ENCODE measurements at regions of chr11 and their contacts with region 1.

Region 1: GRCh38 chr11:67345920-67346799 is 7.2 kb downstream of the POLD4 start:
- DNase-seq: no peak
- H3K4me3 ChIP-seq: no peak overlapping the region
- H3K27ac ChIP-seq: no peak overlapping the region
- H3K4me1 ChIP-seq: no peaks in the 10 kb centered on the region
- H3K27me3 ChIP-seq: no peaks in the 10 kb centered on the region
- CTCF ChIP-seq: peak in 2 of 3 experiments; percentile 68 to 86; a peak in 3 of 4 replicates
- EP300 ChIP-seq: no peak
- POLR2A ChIP-seq: no peak
- RAD21 ChIP-seq: peak; percentile 55 to 63

Region 2: DNA sequence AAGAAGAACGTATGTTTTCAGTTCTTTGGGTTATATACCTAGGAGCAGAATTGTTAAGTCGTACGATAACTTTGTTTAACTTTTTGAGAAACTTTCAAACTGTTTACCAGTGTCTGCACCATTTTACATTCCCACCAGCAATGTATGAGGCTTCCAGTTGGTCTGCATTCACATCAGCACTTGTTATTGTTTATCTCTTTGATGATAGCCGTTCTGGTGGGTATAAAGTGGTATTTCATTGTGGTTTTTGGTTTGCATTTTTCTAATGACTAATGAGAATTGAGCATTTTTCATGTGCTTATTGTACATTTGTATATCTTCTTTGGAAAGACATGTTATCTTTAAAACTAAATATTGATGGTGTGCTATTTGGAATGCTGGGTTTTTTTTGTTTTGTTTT is 167.3 kb before region 1 on chr11:
- CTCF ChIA-PET with region 1: no interaction called
- POLR2A ChIA-PET with region 1: no interaction called
- DNase-seq: no peak
- H3K4me3 ChIP-seq: no peak overlapping the region
- H3K27ac ChIP-seq: no peak overlapping the region
- H3K4me1 ChIP-seq: no peaks in the 10 kb centered on the region
- H3K27me3 ChIP-seq: no peaks in the 10 kb centered on the region
- CTCF ChIP-seq: no peak
- EP300 ChIP-seq: no peak
- POLR2A ChIP-seq: no peak
- RAD21 ChIP-seq: no peak

Region 3: DNA sequence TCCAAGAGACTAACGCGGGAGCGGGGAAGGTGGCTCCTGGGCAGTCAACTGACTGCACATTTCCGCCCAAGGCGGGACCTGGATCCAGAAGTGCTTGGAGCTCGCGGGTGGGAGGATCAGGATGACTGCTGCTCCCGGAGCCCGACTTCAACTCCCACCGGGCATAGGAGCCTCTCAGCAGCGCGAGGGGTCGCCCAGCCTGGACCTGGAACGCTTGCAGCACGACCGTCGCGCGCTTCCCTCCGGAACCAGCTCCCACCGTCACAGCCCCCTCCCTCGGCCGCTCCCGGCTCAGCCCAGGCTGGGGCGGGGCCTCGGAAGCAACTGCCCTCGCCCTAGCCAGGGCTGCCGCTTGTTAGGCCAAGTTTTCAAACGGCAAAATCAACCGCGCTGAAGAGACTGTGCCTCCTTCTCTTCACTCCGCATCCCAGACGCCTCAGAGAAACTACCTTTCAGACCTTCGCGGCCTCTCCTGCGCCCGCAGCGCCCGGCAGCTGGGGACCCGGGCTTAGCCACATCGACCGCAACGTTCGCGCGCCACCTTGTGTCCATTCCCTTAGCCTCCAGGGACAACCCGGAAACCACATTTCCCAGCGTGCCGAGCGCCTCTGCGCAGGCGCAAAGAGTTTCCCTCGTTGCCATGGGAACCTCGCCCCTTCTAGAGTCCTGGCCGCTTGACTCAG is 28.8 kb before region 1 on chr11:
- CTCF ChIA-PET with region 1: interaction called, 62 read pairs
- POLR2A ChIA-PET with region 1: no interaction called
- DNase-seq: peak; percentile 90 to 99
- H3K4me3 ChIP-seq: peak overlapping the region; percentile 41 to 89 (median 68)
- H3K27ac ChIP-seq: no peak overlapping the region
- H3K4me1 ChIP-seq: peaks cover 0 to 3% (median 0%) of the 10 kb centered on the region in 4 experiments; a peak in 2 of 7 replicates
- H3K27me3 ChIP-seq: peaks cover 5 to 16% (median 11%) of the 10 kb centered on the region in 4 experiments; a peak in 6 of 7 replicates
- CTCF ChIP-seq: peak; percentile 89 to 93 (median 92)
- EP300 ChIP-seq: no peak
- POLR2A ChIP-seq: no peak; a peak in 2 of 3 replicates
- RAD21 ChIP-seq: peak; percentile 93 to 95

Region 4: GRCh38 chr11:67366961-67367760 is 21.0 kb after region 1 on chr11:
- CTCF ChIA-PET with region 1: interaction called, 1,305 read pairs
- POLR2A ChIA-PET with region 1: interaction called, 3 read pairs
- DNase-seq: no peak
- H3K4me3 ChIP-seq: no peak overlapping the region
- H3K27ac ChIP-seq: no peak overlapping the region
- H3K4me1 ChIP-seq: peaks cover 0 to 26% (median 20%) of the 10 kb centered on the region in 4 experiments; a peak in 6 of 7 replicates
- H3K27me3 ChIP-seq: peaks cover 0 to 31% (median 25%) of the 10 kb centered on the region in 4 experiments; a peak in 6 of 7 replicates
- CTCF ChIP-seq: no peak
- EP300 ChIP-seq: no peak
- POLR2A ChIP-seq: no peak
- RAD21 ChIP-seq: no peak

Region 5: DNA sequence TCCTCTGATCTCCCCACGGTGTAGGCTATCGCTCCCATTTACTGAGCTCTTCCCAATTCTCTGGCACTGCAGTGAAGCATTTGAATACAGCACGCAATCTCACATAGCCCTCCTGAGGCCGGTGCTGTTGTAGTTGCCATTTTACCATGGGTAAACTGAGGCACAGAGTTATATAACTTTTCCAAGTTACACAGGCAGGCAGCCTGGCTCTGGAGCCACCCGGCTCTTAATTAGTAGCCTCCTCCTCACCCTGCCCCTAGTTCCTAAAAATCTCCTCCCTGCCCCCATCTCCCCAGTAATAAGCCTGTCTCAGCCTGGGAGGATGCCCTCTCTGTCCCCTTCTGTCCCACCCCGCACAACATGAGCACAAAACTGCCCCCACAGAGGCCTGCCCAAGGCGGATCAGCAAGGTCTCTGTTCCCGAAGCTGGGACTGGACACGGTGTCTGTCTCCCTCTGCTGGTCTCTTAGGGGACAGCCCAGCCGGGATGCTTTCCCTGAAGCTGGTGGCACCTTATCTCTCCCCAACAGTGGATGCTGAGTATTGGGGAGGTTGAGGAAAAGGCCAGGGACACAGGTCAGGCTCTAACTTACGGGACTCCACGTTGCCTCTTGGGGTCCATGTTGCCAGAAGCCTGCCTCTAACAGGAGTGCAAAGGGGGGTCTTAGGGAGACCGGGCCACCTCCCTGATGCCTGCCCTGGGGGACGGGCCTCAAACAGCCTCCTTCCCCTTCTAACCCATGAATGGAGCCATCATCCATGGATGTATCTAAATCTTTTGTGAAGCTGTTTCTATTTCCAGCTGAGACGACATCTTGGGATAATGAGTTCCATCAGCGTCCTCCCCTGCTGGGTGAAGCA is 36.3 kb after region 1 on chr11:
- CTCF ChIA-PET with region 1: interaction called, 1,305 read pairs
- POLR2A ChIA-PET with region 1: interaction called, 4 read pairs
- DNase-seq: peak in 1 of 2 experiments; percentile 94
- H3K4me3 ChIP-seq: no peak overlapping the region
- H3K27ac ChIP-seq: no peak overlapping the region
- H3K4me1 ChIP-seq: peaks cover 0 to 11% (median 5%) of the 10 kb centered on the region in 4 experiments; a peak in 5 of 7 replicates
- H3K27me3 ChIP-seq: peaks cover 0 to 16% (median 10%) of the 10 kb centered on the region in 4 experiments; a peak in 5 of 7 replicates
- CTCF ChIP-seq: peak; percentile 95 to 99 (median 98)
- EP300 ChIP-seq: no peak
- POLR2A ChIP-seq: no peak
- RAD21 ChIP-seq: peak; percentile 99 to 100

Region 6: DNA sequence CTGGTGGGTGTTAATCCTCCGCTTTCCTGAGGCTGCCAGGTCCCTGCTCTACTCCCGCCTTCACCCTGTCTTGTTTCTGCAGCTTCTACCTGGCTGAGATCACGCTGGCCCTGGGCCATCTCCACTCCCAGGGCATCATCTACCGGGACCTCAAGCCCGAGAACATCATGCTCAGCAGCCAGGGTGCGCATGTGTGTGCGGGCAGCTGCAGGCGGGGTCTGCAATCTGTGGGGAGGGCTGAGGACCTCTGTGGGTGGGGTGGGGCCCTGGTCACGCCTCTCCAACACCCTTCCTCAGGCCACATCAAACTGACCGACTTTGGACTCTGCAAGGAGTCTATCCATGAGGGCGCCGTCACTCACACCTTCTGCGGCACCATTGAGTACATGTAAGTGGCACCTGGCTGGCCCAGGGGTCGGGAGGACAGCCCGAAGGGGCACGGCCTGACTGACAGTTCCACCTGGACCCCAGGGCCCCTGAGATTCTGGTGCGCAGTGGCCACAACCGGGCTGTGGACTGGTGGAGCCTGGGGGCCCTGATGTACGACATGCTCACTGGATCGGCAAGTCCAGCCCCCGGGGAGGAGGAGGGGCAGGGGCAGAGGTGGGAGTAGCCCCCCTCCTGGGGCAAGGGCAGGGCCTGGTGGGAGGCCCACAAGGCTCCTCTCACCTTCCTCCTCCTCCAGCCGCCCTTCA is 86.6 kb after region 1 on chr11:
- CTCF ChIA-PET with region 1: no interaction called
- POLR2A ChIA-PET with region 1: no interaction called
- DNase-seq: no peak
- H3K4me3 ChIP-seq: no peak overlapping the region
- H3K27ac ChIP-seq: no peak overlapping the region
- H3K4me1 ChIP-seq: peaks cover 0 to 24% (median 16%) of the 10 kb centered on the region in 4 experiments; a peak in 6 of 7 replicates
- H3K27me3 ChIP-seq: no peaks in the 10 kb centered on the region
- CTCF ChIP-seq: no peak
- EP300 ChIP-seq: no peak
- POLR2A ChIP-seq: no peak
- RAD21 ChIP-seq: no peak